Transverse colon (tissue), 4 donors: ENCODE measurements at regions of chr4 and their contacts with region 1.

Region 1: GRCh38 chr4:74793757-74794340 is 474 bp downstream of the BTC start:
- DNase-seq: peak; percentile 79
- H3K4me3 ChIP-seq: peak overlapping the region; percentile 53 to 73 (median 66)
- H3K27ac ChIP-seq: peak overlapping the region; percentile 81 to 90 (median 88)
- H3K4me1 ChIP-seq: peaks cover 0 to 14% (median 8%) of the 10 kb centered on the region in 4 donors
- H3K27me3 ChIP-seq: peaks cover 15% of the 10 kb centered on the region
- CTCF ChIP-seq: peak in 4 of 5 experiments; percentile 26 to 44 (median 30)
- EP300 ChIP-seq: no peak
- POLR2A ChIP-seq: peak; percentile 60

Region 2: DNA sequence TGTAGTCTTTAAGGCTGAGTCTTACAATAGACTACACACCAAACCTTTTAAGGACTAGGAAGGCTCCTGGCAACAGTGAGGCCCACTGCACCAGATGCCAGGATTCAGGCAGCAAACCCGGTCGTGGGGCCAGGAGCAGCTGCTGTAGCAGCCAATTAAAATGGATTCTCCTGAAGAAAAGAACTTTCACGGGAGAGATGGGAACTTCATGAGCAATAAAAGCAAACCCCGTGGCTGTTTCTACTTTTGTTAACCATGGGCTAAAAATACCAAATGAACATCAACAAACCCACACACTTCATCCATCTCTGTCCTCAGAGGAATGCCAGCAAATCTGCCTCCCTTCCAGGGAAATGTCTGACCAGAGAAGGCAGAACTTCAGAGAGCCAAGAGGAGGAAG is 100.9 kb before region 1 on chr4:
- in situ Hi-C with region 1: no loop called
- intact Hi-C with region 1: loop called (anchors 10 kb)
- DNase-seq: peak; percentile 17
- H3K4me3 ChIP-seq: no peak overlapping the region
- H3K27ac ChIP-seq: peak overlapping the region; percentile 39 to 61 (median 56)
- H3K4me1 ChIP-seq: peaks cover 0 to 4% (median 0%) of the 10 kb centered on the region in 4 donors
- H3K27me3 ChIP-seq: no peaks in the 10 kb centered on the region
- CTCF ChIP-seq: no peak
- EP300 ChIP-seq: no peak
- POLR2A ChIP-seq: no peak

Region 3: GRCh38 chr4:74830925-74831324 is 37.1 kb after region 1 on chr4:
- in situ Hi-C with region 1: no loop called
- intact Hi-C with region 1: loop called (anchors 1 kb)
- DNase-seq: no peak
- H3K4me3 ChIP-seq: no peak overlapping the region
- H3K27ac ChIP-seq: no peak overlapping the region
- H3K4me1 ChIP-seq: no peaks in the 10 kb centered on the region
- H3K27me3 ChIP-seq: no peaks in the 10 kb centered on the region
- CTCF ChIP-seq: no peak
- EP300 ChIP-seq: no peak
- POLR2A ChIP-seq: no peak

Region 4: GRCh38 chr4:76459291-76459723 is 1665.5 kb after region 1 on chr4:
- in situ Hi-C with region 1: no loop called
- intact Hi-C with region 1: loop called (anchors 5 kb)
- DNase-seq: no peak
- H3K4me3 ChIP-seq: no peak overlapping the region
- H3K27ac ChIP-seq: peak overlapping the region in 3 of 4 donors; percentile 6 to 63 (median 26)
- H3K4me1 ChIP-seq: no peaks in the 10 kb centered on the region
- H3K27me3 ChIP-seq: no peaks in the 10 kb centered on the region
- CTCF ChIP-seq: no peak
- EP300 ChIP-seq: no peak
- POLR2A ChIP-seq: no peak